ENCODE measurements at regions of chr4 and their contacts with region 1.

Region 1: GRCh38 chr4:139501927-139502899 is 48.3 kb downstream of the RAB33B start:
- DNase-seq: no peak
- H3K4me3 ChIP-seq: no peak overlapping the region
- H3K27ac ChIP-seq: no peak overlapping the region
- H3K4me1 ChIP-seq: peaks cover 6% of the 10 kb centered on the region
- H3K27me3 ChIP-seq: no peaks in the 10 kb centered on the region
- CTCF ChIP-seq: no peak

Region 2: GRCh38 chr4:139386421-139386820 is 115.8 kb before region 1 on chr4:
- CTCF ChIA-PET with region 1: no interaction called
- POLR2A ChIA-PET with region 1: interaction called, 13 read pairs
- intact Hi-C with region 1: no loop called
- DNase-seq: no peak
- H3K4me3 ChIP-seq: no peak overlapping the region
- H3K27ac ChIP-seq: no peak overlapping the region
- H3K4me1 ChIP-seq: no peaks in the 10 kb centered on the region
- H3K27me3 ChIP-seq: no peaks in the 10 kb centered on the region
- CTCF ChIP-seq: no peak

Measured in A673 (cell line).